ENCODE measurements at regions of chr19 and their contacts with region 1.

Region 1: GRCh38 chr19:32339988-32340874 is 5.2 kb upstream of the ZNF507 start:
- DNase-seq: peak; percentile 81 to 83
- H3K4me3 ChIP-seq: no peak overlapping the region
- H3K27ac ChIP-seq: no peak overlapping the region
- H3K4me1 ChIP-seq: no peaks in the 10 kb centered on the region
- H3K27me3 ChIP-seq: no peaks in the 10 kb centered on the region
- CTCF ChIP-seq: peak; percentile 35 to 81 (median 70)
- POLR2A ChIP-seq: no peak

Region 2: DNA sequence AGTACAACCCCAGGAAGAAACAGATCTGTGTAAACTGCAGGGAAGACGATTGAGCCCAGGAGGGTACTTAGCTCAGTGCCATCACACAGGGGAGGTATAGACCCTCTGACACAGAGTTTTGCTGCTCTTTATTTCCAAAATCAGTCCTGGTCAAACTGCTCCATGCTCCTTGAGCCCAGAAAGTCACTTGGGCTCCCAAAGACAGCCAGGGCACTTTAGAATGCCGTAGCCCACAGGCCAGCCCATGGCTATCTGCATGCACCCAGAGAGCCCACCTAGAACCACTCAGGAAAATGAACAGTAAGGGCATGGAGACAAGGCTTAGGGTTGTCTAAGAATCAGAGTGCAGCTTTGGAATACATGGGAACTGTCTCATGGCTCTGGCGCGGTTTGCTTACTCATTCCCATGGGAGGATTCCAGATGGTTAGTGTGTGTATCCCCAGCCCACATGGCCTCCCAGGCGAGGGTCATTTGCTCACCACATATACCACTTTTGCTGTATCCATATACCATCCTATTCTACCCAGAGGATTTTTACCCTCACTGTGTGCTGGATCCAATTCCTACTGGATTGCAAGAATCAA is 226.1 kb after region 1 on chr19:
- intact Hi-C with region 1: loop called (anchors 10 kb)
- DNase-seq: no peak
- H3K4me3 ChIP-seq: no peak overlapping the region
- H3K27ac ChIP-seq: no peak overlapping the region
- H3K4me1 ChIP-seq: no peaks in the 10 kb centered on the region
- H3K27me3 ChIP-seq: no peaks in the 10 kb centered on the region
- CTCF ChIP-seq: no peak
- POLR2A ChIP-seq: no peak